ENCODE measurements at regions of chr16 and their contacts with region 1.

Region 1: DNA sequence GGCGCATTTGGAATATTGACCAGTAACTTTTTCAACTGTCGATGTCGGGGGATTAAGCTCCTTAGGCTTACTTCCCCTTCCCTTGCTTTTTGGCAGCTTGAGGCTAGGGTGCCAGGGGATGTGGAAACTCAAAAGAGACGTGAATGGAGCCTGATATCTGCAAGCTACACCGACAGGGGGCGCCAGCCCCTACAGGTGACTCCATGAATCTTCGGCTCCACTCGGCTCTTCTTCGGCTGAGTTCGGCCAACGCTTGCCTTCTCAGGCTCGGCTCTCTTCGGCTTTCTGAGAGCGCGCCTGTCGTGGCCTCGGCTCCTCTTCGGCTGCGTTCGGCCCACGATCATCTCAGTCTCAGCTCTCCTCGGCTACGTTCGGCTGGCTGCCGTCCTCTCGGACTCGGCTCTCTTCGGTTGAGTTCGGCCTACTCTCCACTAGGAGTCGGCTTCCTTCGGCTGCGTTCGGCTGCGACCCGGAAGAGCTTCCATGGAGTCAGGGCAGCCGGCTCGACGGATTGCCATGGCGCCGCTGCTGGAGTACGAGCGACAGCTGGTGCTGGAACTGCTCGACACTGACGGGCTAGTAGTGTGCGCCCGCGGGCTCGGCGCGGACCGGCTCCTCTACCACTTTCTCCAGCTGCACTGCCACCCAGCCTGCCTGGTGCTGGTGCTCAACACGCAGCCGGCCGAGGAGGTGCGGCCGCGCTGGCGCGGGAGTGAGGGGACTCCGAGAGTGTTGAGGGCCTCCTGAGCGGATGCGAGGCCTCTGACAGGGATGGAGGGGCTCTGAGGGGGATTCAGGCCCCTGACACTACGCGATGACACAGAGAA is at the start of gene ERCC4:
- DNase-seq: peak; percentile 100
- H3K4me3 ChIP-seq: peak within 1 kb of the TSS; percentile 81 to 91
- H3K27ac ChIP-seq: peak within 1 kb of the TSS; percentile 71 to 82
- H3K4me1 ChIP-seq: peaks cover 22% of the 10 kb centered on the region
- H3K27me3 ChIP-seq: no peaks in the 10 kb centered on the region
- CTCF ChIP-seq: peak; percentile 89 to 97 (median 97)
- POLR2A ChIP-seq: no peak
- total RNA-seq, gene ERCC4: 17.7 to 29.3 TPM

Region 2: GRCh38 chr16:13866073-13866472 is 53.8 kb before region 1 on chr16:
- intact Hi-C with region 1: loop called (anchors 10 kb)
- DNase-seq: peak; percentile 91
- H3K4me3 ChIP-seq: no peak overlapping the region
- H3K27ac ChIP-seq: no peak overlapping the region
- H3K4me1 ChIP-seq: no peaks in the 10 kb centered on the region
- H3K27me3 ChIP-seq: no peaks in the 10 kb centered on the region
- CTCF ChIP-seq: peak; percentile 50 to 54 (median 53)
- POLR2A ChIP-seq: no peak

Region 3: GRCh38 chr16:14003074-14003570 is 83.2 kb after region 1 on chr16:
- intact Hi-C with region 1: no loop called
- DNase-seq: peak; percentile 68
- H3K4me3 ChIP-seq: peak overlapping the region in 1 of 2 donors; percentile 38
- H3K27ac ChIP-seq: peak overlapping the region in 1 of 2 donors; percentile 33
- H3K4me1 ChIP-seq: peaks cover 15% of the 10 kb centered on the region
- H3K27me3 ChIP-seq: no peaks in the 10 kb centered on the region
- CTCF ChIP-seq: no peak
- POLR2A ChIP-seq: no peak

Region 4: GRCh38 chr16:14249291-14250032 is 329.6 kb after region 1 on chr16:
- intact Hi-C with region 1: loop called (anchors 10 kb)
- DNase-seq: peak; percentile 62
- H3K4me3 ChIP-seq: no peak overlapping the region
- H3K27ac ChIP-seq: no peak overlapping the region
- H3K4me1 ChIP-seq: no peaks in the 10 kb centered on the region
- H3K27me3 ChIP-seq: no peaks in the 10 kb centered on the region
- CTCF ChIP-seq: peak; percentile 46 to 81 (median 69)
- POLR2A ChIP-seq: no peak

Region 5: DNA sequence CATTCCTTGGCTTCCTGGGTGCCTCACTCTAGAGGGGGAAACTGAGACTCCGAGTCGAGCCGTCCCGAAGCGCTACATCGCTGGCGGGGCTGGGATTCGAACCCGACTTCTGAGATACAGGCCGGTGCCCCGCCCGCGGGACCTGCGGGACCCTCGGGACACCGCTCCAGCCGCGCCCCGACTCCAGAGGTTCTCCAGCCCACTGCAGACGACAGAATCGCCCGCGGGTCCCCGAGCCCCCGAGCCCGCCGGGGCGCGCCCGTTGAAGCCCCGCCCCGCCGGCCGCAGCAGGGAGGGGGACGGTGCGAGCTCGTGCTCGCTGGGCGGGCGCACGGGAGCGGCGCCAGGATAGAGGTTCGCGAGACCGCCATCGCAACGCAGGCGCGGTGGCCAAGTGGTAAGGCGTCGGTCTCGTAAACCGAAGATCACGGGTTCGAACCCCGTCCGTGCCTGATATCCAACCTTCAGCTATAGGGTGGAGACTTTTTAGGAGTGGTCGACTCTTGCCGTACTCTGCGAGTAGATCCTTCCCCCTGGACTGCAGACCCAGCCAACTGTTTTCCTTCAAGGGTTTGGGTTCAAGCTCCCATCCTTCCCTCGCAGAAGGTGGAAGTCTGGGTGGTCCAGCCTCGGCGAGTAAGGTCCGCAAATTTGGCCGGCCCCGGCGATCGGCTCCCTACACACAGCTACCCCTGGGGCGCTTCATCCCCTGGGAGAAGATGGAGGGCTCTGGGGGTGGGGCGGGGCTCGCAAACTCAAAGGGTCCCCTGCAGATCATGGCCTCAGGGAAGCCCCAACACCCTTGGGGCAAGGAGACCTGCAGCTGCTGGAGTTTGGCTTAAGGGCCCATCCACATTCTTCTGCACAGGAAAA is 365.9 kb after region 1 on chr16:
- intact Hi-C with region 1: loop called (anchors 10 kb)
- DNase-seq: peak; percentile 95
- H3K4me3 ChIP-seq: peak overlapping the region; percentile 85 to 90
- H3K27ac ChIP-seq: peak overlapping the region; percentile 92 to 94
- H3K4me1 ChIP-seq: peaks cover 10% of the 10 kb centered on the region
- H3K27me3 ChIP-seq: no peaks in the 10 kb centered on the region
- CTCF ChIP-seq: no peak
- POLR2A ChIP-seq: no peak

Region 6: GRCh38 chr16:14300705-14301168 is 380.8 kb after region 1 on chr16:
- intact Hi-C with region 1: loop called (anchors 5 kb)
- DNase-seq: peak; percentile 89
- H3K4me3 ChIP-seq: peak overlapping the region in 1 of 2 donors; percentile 82
- H3K27ac ChIP-seq: peak overlapping the region; percentile 25 to 44
- H3K4me1 ChIP-seq: peaks cover 6% of the 10 kb centered on the region
- H3K27me3 ChIP-seq: no peaks in the 10 kb centered on the region
- CTCF ChIP-seq: peak; percentile 60 to 81 (median 61)
- POLR2A ChIP-seq: no peak